PC-9 (cell line): ENCODE measurements at regions of chr7 and their contacts with region 1.

Region 1: GRCh38 chr7:16078076-16078952 is 343.0 kb downstream of the CRPPA start:
- DNase-seq: peak; percentile 55 to 69
- H3K4me3 ChIP-seq: no peak overlapping the region
- H3K27ac ChIP-seq: no peak overlapping the region
- H3K4me1 ChIP-seq: no peaks in the 10 kb centered on the region
- H3K27me3 ChIP-seq: no peaks in the 10 kb centered on the region
- CTCF ChIP-seq: peak; percentile 93

Region 2: DNA sequence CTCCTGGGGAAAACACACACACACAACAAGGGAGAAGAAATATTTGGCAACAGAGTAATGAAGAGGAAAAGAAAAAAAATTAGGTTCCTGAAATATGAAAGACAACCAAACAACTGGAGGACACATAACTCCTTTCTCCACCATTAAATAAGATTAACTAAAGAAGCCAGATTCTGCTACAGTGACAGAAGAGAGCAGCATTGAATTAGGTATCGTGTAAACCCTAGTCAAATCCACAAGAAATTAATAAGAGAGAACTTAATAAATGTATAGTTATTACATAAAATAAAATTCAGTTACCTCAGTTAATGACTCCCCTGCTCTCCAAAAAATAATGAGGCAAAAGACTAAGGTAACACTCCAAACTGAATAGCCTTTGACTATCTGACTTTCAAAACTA is 36.3 kb after region 1 on chr7:
- CTCF ChIA-PET with region 1: no interaction called
- POLR2A ChIA-PET with region 1: no interaction called
- intact Hi-C with region 1: loop called (anchors 5 kb)
- DNase-seq: no peak
- H3K4me3 ChIP-seq: no peak overlapping the region
- H3K27ac ChIP-seq: no peak overlapping the region
- H3K4me1 ChIP-seq: no peaks in the 10 kb centered on the region
- H3K27me3 ChIP-seq: no peaks in the 10 kb centered on the region
- CTCF ChIP-seq: peak; percentile 82

Region 3: DNA sequence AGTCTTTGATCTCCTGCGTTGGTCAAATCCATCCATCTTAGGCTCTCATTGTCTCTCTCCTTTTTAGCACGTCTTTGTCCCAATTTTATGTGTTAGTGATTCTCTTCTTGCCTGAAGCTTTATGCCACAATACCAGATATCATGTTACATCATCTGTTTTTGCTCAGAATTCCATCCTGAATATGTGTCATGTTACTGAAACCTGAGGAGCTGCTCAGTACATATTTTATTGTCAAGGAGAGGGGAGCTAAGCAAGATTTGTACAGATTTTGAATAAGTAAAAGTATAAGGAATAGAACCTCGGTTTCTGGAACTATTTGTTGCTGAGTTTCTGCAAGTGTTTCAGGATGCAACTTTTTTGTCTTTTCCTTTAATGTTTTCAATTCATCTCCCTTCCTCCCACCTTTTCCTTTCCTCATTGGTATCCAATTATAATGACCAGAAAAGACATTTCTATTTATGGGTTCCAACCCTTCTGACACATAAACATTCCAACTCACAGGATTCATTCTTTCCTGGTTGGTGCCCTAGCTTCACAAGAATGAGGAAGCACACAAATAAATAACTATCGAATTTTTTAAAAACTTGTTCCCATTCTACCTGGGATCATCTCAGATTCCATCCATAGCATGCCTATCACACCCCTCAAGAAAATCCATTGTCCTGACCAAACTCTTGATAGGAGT is 51.3 kb after region 1 on chr7:
- CTCF ChIA-PET with region 1: no interaction called
- POLR2A ChIA-PET with region 1: no interaction called
- intact Hi-C with region 1: no loop called
- DNase-seq: peak; percentile 46 to 95
- H3K4me3 ChIP-seq: peak overlapping the region; percentile 17
- H3K27ac ChIP-seq: peak overlapping the region; percentile 90
- H3K4me1 ChIP-seq: peaks cover 35% of the 10 kb centered on the region
- H3K27me3 ChIP-seq: no peaks in the 10 kb centered on the region
- CTCF ChIP-seq: no peak

Region 4: DNA sequence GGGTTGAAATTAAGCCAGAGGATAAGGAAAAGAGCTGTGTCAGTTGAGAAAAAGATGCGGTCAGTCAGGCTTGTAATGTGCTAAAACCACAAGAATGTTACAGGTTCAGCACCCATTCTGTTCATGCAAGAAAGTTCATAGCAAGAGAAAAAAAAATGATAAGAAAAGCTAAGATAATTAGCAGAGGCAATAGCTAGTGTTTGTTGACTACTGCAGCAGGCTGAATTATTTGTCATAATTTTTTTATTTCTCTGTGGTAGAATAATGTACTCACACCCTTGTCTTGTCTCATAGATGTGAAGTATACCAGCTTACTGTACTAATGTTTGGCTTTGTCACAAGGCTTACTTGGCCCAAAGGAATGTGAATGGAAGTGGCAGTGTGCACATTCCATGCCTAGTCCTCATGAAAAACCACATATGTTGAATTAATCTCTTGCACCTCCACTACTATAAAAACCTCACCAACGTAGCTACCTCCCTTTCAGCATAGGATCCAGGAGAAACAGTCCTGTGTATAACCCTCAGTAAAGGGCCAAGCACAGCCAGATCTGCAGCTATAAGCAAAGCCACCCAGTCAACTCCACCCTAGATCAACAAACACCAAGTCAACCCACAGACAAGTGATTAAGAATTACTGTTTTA is 268.2 kb after region 1 on chr7:
- CTCF ChIA-PET with region 1: no interaction called
- POLR2A ChIA-PET with region 1: no interaction called
- intact Hi-C with region 1: loop called (anchors 1 kb)
- DNase-seq: peak; percentile 60 to 98
- H3K4me3 ChIP-seq: no peak overlapping the region; the same call in 1 of the 2 replicates
- H3K27ac ChIP-seq: peak overlapping the region; percentile 80
- H3K4me1 ChIP-seq: peaks cover 37% of the 10 kb centered on the region
- H3K27me3 ChIP-seq: no peaks in the 10 kb centered on the region
- CTCF ChIP-seq: no peak

Region 5: DNA sequence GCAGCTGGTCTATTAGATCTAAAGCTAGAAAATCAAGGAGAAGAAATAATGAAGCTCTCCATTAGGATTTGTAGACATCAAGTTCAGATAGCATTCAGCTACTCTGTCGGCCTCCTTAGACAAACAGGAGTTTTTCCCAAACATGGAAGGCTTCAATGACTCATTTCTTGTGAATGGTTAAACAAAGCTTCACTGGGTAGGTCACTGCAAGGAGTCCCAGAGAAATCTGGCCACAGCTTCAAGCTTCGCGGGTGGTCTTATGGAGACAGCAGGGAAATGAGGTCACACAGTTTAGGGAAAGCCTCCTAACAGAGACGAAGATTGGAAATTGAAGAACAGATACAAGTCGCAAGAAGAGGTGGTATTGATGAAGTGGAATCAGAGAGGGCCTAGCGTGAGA is 425.7 kb after region 1 on chr7:
- CTCF ChIA-PET with region 1: no interaction called
- POLR2A ChIA-PET with region 1: no interaction called
- intact Hi-C with region 1: no loop called
- DNase-seq: no peak
- H3K4me3 ChIP-seq: no peak overlapping the region
- H3K27ac ChIP-seq: no peak overlapping the region
- H3K4me1 ChIP-seq: no peaks in the 10 kb centered on the region
- H3K27me3 ChIP-seq: no peaks in the 10 kb centered on the region
- CTCF ChIP-seq: no peak

Region 6: GRCh38 chr7:16668049-16668858 is 589.9 kb after region 1 on chr7:
- CTCF ChIA-PET with region 1: no interaction called
- POLR2A ChIA-PET with region 1: no interaction called
- intact Hi-C with region 1: loop called (anchors 1 kb)
- DNase-seq: peak; percentile 88 to 100
- H3K4me3 ChIP-seq: peak overlapping the region; percentile 19; the same call in 1 of the 2 replicates
- H3K27ac ChIP-seq: peak overlapping the region; percentile 82
- H3K4me1 ChIP-seq: peaks cover 36% of the 10 kb centered on the region
- H3K27me3 ChIP-seq: no peaks in the 10 kb centered on the region
- CTCF ChIP-seq: peak; percentile 54; the same call in 1 of the 2 replicates